SK-MEL-5 (cell line): ENCODE measurements at regions of chr1 and their contacts with region 1.

Region 1: DNA sequence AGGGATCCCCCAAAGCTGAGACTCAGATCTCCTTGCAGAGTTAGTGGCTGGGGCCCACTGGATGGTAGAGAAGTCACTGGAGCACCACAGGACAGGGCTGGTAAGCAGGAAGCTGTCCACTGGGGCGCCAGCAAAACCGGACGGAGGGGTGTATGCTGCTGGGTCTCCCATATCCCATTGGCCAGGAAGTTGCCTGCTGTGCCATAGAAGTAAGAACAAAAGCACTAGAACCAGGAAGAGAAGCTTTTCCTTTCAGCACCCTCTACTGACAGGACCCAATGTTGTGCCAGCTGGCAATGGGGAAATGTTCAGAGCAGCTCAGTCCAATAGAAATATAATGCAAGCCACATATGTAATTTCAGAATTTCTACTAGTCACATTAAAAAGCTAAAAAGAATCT is 146.6 kb downstream of the SPATA46 start:
- DNase-seq: peak; percentile 81

Region 2: GRCh38 chr1:162040681-162041080 is 189.4 kb before region 1 on chr1:
- in situ Hi-C with region 1: loop called (anchors 10 kb)
- DNase-seq: peak; percentile 60

Region 3: GRCh38 chr1:162113419-162113818 is 116.7 kb before region 1 on chr1:
- in situ Hi-C with region 1: no loop called
- DNase-seq: no peak

Region 4: GRCh38 chr1:162530307-162530987 is 300.4 kb after region 1 on chr1:
- in situ Hi-C with region 1: no loop called
- DNase-seq: no peak